Activated CD4-positive, alpha-beta memory T cell treated with anti-CD3 and anti-CD28 coated beads for 36 hours (primary cell): ENCODE measurements at regions of chr1 and their contacts with region 1.

Region 1: GRCh38 chr1:67404212-67404620 is 26.0 kb downstream of the SERBP1 start:
- DNase-seq: no peak
- H3K4me3 Mint-ChIP-seq: no peak overlapping the region
- H3K27ac Mint-ChIP-seq: no peak overlapping the region
- H3K4me1 Mint-ChIP-seq: peaks cover 14% of the 10 kb centered on the region
- H3K27me3 Mint-ChIP-seq: no peaks in the 10 kb centered on the region

Region 2: GRCh38 chr1:67227196-67227595 is 177.0 kb before region 1 on chr1:
- CTCF ChIA-PET with region 1: no interaction called
- POLR2A ChIA-PET with region 1: no interaction called
- intact Hi-C with region 1: loop called (anchors 10 kb)
- DNase-seq: no peak
- H3K4me3 Mint-ChIP-seq: no peak overlapping the region
- H3K27ac Mint-ChIP-seq: no peak overlapping the region
- H3K4me1 Mint-ChIP-seq: peaks cover 6% of the 10 kb centered on the region
- H3K27me3 Mint-ChIP-seq: peaks cover 1% of the 10 kb centered on the region

Region 3: DNA sequence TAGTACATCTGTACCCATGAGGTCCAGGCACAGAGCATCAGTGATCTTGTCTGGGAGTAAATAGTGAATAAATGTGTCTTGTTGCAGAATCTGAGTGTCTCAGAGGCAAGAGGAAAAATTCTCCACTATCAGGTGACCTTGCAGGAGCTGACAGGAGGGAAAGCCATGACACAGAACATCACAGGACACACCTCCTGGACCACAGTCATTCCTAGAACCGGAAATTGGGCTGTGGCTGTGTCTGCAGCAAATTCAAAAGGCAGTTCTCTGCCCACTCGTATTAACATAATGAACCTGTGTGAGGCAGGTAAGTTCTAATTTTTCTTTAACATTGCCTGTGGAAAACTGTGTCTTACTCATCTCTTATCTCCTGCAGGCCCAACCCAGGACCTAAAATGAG is 53.4 kb before region 1 on chr1:
- CTCF ChIA-PET with region 1: no interaction called
- POLR2A ChIA-PET with region 1: no interaction called
- intact Hi-C with region 1: loop called (anchors 5 kb)
- DNase-seq: peak; percentile 82
- H3K4me3 Mint-ChIP-seq: no peak overlapping the region
- H3K27ac Mint-ChIP-seq: peak overlapping the region; percentile 59
- H3K4me1 Mint-ChIP-seq: peaks cover 41% of the 10 kb centered on the region
- H3K27me3 Mint-ChIP-seq: no peaks in the 10 kb centered on the region

Region 4: DNA sequence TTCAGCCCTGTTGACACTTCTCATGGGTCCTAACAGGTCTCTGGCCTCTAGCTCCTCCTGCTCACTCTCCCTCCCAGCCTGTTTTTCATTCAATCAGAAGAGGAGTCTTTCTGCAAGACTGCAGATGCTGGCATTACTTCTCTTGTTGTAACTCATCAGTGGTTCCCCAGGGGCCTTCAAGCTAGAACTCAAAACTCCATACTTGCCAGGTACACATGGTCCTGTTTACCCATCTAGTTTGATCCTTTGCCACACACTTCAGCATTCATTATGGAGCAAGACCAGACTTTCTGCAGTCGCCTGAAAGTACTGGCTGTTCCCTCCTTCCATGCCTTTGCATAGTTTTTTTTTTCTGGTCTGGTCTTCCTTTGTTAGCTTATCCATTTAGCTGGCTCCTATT is 21.9 kb before region 1 on chr1:
- CTCF ChIA-PET with region 1: no interaction called
- POLR2A ChIA-PET with region 1: no interaction called
- intact Hi-C with region 1: no loop called
- DNase-seq: no peak
- H3K4me3 Mint-ChIP-seq: no peak overlapping the region
- H3K27ac Mint-ChIP-seq: no peak overlapping the region
- H3K4me1 Mint-ChIP-seq: no peaks in the 10 kb centered on the region
- H3K27me3 Mint-ChIP-seq: no peaks in the 10 kb centered on the region